IMR-90 (cell line): ENCODE measurements at regions of chr14 and their contacts with region 1.

Region 1: GRCh38 chr14:103546652-103547454 is 15.6 kb downstream of the BAG5 start:
- DNase-seq: no peak
- ATAC-seq: peak; percentile 80
- H3K4me3 ChIP-seq: no peak overlapping the region
- H3K27ac ChIP-seq: no peak overlapping the region
- H3K4me1 ChIP-seq: peaks cover 10% of the 10 kb centered on the region
- H3K27me3 ChIP-seq: no peaks in the 10 kb centered on the region
- CTCF ChIP-seq: peak; percentile 78
- POLR2A ChIP-seq: no peak
- RAD21 ChIP-seq: peak; percentile 91

Region 2: GRCh38 chr14:103500148-103500990 is 46.5 kb before region 1 on chr14:
- CTCF ChIA-PET with region 1: no interaction called
- POLR2A ChIA-PET with region 1: no interaction called
- dilution Hi-C with region 1: no loop called
- in situ Hi-C with region 1: no loop called
- intact Hi-C with region 1: loop called (anchors 1 kb)
- DNase-seq: peak; percentile 81
- ATAC-seq: peak; percentile 96
- H3K4me3 ChIP-seq: no peak overlapping the region
- H3K27ac ChIP-seq: no peak overlapping the region
- H3K4me1 ChIP-seq: no peaks in the 10 kb centered on the region; the same call in 1 of the 2 replicates
- H3K27me3 ChIP-seq: no peaks in the 10 kb centered on the region
- CTCF ChIP-seq: peak; percentile 87
- POLR2A ChIP-seq: no peak
- RAD21 ChIP-seq: peak; percentile 65

Region 3: GRCh38 chr14:103518422-103519042 is 28.3 kb before region 1 on chr14:
- CTCF ChIA-PET with region 1: interaction called, 3 read pairs
- POLR2A ChIA-PET with region 1: no interaction called
- dilution Hi-C with region 1: no loop called
- in situ Hi-C with region 1: no loop called
- intact Hi-C with region 1: loop called (anchors 1 kb)
- DNase-seq: peak; percentile 29
- ATAC-seq: peak; percentile 45
- H3K4me3 ChIP-seq: no peak overlapping the region
- H3K27ac ChIP-seq: no peak overlapping the region
- H3K4me1 ChIP-seq: peaks cover 18% of the 10 kb centered on the region
- H3K27me3 ChIP-seq: peaks cover 12% of the 10 kb centered on the region
- CTCF ChIP-seq: peak; percentile 76
- POLR2A ChIP-seq: 0 out of 2 replicates have a peak, but pooled peaks have one; percentile 36
- RAD21 ChIP-seq: peak; percentile 69